SK-N-SH (cell line): ENCODE measurements at regions of chr16 and their contacts with region 1.

Region 1: GRCh38 chr16:30615358-30616091 is 5.3 kb upstream of the ZNF689 start:
- DNase-seq: peak; percentile 71
- H3K4me3 ChIP-seq: no peak overlapping the region; a peak in 1 of 4 replicates
- H3K27ac ChIP-seq: no peak overlapping the region; a peak in 1 of 4 replicates
- H3K4me1 ChIP-seq: peaks cover 0 to 4% of the 10 kb centered on the region in 2 experiments; a peak in 1 of 4 replicates
- H3K27me3 ChIP-seq: no peaks in the 10 kb centered on the region
- CTCF ChIP-seq: peak; percentile 59
- EP300 ChIP-seq: no peak
- RAD21 ChIP-seq: peak; percentile 71

Region 2: DNA sequence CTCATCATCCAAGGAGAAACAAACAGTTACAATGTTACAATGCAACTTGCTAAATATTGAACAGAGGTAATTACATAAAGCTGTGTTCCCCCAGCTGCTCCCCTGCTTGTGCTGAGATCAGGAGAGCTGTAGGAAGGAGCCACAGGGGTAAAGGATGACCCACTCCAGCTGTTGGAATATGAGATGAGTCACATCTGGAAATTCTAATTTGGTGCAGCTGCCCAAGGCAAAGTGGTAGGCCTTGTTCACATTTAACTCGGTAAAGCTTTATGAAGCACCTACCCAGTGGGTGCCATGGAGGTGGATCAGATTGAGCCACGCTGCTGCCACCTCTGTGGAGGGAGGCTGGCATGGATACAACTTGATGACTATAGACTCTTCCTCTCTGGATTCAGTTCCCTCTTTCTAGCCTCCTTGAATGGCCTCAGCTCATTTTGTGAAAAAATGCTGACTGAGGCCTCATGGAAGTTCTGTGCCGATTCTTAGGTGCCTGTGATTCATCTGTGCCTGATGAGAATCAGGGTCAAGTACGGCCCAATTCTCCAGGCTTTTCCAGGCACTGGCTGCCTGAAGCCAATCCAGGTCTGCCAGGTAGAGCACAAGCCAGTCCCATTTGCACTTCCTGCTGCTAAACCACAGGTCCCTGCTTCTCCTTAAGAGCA is 12.8 kb before region 1 on chr16:
- CTCF ChIA-PET with region 1: interaction called, 10 read pairs
- POLR2A ChIA-PET with region 1: interaction called, 4 read pairs
- DNase-seq: no peak
- H3K4me3 ChIP-seq: no peak overlapping the region
- H3K27ac ChIP-seq: no peak overlapping the region
- H3K4me1 ChIP-seq: no peaks in the 10 kb centered on the region
- H3K27me3 ChIP-seq: no peaks in the 10 kb centered on the region
- CTCF ChIP-seq: no peak
- EP300 ChIP-seq: no peak
- RAD21 ChIP-seq: no peak

Region 3: GRCh38 chr16:30628627-30629540 is 13.4 kb after region 1 on chr16:
- CTCF ChIA-PET with region 1: interaction called, 65 read pairs
- POLR2A ChIA-PET with region 1: interaction called, 3 read pairs
- DNase-seq: peak; percentile 74
- H3K4me3 ChIP-seq: peak overlapping the region in 1 of 2 experiments; percentile 4; a peak in 1 of 4 replicates
- H3K27ac ChIP-seq: no peak overlapping the region
- H3K4me1 ChIP-seq: no peaks in the 10 kb centered on the region
- H3K27me3 ChIP-seq: no peaks in the 10 kb centered on the region
- CTCF ChIP-seq: peak; percentile 91
- EP300 ChIP-seq: no peak
- RAD21 ChIP-seq: peak; percentile 87

Region 4: DNA sequence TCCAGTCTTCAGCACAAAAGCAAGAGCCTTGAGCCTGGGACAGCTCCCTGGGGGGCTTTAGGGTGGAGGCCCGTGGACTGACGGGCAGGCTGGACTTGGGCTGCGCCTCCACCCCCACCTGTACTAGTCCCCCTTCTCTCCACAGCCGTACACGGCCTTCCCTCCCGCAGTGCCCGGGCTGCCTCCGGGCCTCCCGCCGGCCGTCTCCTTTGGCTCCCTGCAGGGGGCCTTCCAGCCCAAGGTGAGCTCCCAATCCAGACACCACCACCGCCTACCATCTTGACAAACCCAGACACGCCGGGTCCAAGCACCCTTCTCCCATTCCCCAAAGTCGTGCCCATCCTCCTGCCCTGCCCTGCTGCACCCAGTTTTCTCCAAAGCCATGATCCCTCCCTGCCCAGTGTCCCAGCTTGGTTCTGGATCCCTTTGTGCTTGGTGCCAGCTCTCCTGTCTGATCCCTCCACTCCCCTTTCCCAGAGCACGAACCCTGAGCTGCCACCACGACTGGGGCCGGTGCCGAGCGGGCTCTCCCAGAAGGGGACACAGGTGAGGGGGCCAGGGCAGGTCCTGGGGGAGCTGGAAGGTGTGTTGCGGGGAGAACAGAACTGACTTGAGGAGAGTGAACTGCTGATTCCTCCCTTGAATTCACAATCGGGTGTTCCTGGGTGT is 49.8 kb after region 1 on chr16:
- CTCF ChIA-PET with region 1: no interaction called
- POLR2A ChIA-PET with region 1: no interaction called
- DNase-seq: no peak
- H3K4me3 ChIP-seq: no peak overlapping the region
- H3K27ac ChIP-seq: no peak overlapping the region
- H3K4me1 ChIP-seq: peaks cover 9 to 15% of the 10 kb centered on the region in 2 experiments; a peak in 2 of 4 replicates
- H3K27me3 ChIP-seq: no peaks in the 10 kb centered on the region
- CTCF ChIP-seq: no peak
- EP300 ChIP-seq: no peak
- RAD21 ChIP-seq: no peak

Region 5: DNA sequence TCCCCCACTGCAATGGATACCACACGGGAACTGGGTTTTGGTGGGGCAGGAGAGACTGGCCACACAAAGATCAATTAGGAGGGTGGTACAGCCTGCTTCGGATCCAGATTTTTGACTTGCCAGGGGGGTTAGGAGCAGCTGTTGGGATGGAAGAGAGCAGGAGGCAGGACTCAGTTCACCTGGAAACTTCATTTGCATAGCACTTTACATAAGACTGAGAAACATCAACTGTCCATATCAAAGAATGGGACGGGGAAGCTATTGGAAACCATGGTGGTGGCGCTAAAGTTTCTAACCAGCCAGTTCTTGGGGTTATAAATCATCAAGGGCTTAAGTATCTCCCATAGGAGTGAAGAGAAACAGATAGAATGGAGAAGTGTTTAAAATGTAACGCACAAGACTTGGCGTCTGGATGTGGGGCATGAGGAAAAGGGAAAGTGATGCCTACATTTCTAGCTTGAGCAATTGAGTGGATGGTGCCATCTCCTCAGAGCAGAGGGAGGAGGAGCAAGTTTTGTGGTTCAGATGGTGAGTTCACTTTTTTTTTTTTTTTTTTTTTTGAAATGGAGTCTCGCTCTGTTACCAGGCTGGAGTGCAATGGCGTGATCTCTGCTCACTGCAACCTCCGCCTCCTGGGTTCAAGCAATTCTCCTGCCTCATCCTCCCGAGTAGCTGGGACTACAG is 77.0 kb after region 1 on chr16:
- CTCF ChIA-PET with region 1: interaction called, 10 read pairs
- POLR2A ChIA-PET with region 1: no interaction called
- DNase-seq: no peak
- H3K4me3 ChIP-seq: no peak overlapping the region
- H3K27ac ChIP-seq: no peak overlapping the region
- H3K4me1 ChIP-seq: peaks cover 0 to 5% of the 10 kb centered on the region in 2 experiments; a peak in 1 of 4 replicates
- H3K27me3 ChIP-seq: no peaks in the 10 kb centered on the region
- CTCF ChIP-seq: no peak
- EP300 ChIP-seq: no peak
- RAD21 ChIP-seq: no peak

Region 6: DNA sequence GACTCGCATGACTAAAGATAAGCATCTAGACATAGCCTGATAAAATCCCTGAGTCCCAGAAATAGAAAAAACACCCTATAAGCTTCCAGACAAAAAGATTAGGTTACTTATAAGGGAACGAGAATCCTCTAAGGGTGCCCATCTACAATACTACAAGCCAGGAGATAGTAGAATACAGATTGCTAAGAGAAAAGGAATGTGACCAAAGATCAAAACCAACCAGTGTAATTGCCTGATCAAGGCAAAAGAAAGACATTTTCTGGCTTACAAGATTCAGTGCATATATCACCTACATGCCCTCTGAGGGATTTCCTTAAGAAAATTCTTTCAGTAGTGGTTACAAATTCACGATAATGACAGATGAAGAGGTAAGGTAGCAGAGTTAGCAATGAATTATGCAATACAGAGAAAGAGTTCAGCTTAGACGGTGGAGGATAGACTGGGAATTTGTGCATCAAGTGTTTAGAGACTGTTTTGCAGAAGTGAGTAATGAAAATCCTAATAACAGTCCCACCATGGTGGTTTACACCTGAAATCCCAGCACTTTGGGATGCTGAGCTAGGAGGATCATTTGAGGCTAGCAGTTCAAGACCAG is 243.4 kb after region 1 on chr16:
- CTCF ChIA-PET with region 1: no interaction called
- POLR2A ChIA-PET with region 1: no interaction called
- DNase-seq: no peak
- H3K4me3 ChIP-seq: no peak overlapping the region
- H3K27ac ChIP-seq: no peak overlapping the region
- H3K4me1 ChIP-seq: no peaks in the 10 kb centered on the region
- H3K27me3 ChIP-seq: no peaks in the 10 kb centered on the region
- CTCF ChIP-seq: no peak
- EP300 ChIP-seq: no peak
- RAD21 ChIP-seq: no peak